CD8-positive, alpha-beta T cell (primary cell): ENCODE measurements at regions of chr1 and their contacts with region 1.

Region 1: DNA sequence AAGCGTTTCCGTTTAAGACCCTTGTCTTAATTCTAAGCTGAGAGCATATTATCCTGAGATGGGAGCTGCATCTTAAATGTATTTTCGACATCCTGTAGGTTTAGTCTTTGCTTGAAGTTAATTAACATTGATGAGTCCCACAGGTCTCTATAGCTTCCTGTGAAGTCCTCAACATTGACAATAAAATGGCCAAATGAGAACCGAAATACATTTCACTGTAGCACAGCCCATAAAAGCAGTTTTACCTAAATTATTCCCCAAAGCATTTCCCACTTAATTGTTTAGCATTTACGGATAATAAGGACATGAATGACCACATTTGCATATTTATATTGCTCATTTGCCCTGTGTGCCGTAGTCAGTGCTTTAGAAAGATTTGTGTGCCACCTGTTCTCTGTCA is 116.4 kb downstream of the CRB1 start:
- DNase-seq: no peak
- ATAC-seq: no peak
- H3K4me3 ChIP-seq: no peak overlapping the region
- H3K4me3 Mint-ChIP-seq: no peak overlapping the region
- H3K27ac ChIP-seq: no peak overlapping the region
- H3K27ac Mint-ChIP-seq: no peak overlapping the region
- H3K4me1 ChIP-seq: no peaks in the 10 kb centered on the region
- H3K4me1 Mint-ChIP-seq: peaks cover 3% of the 10 kb centered on the region
- H3K27me3 ChIP-seq: no peaks in the 10 kb centered on the region
- H3K27me3 Mint-ChIP-seq: no peaks in the 10 kb centered on the region
- CTCF ChIP-seq: no peak

Region 2: DNA sequence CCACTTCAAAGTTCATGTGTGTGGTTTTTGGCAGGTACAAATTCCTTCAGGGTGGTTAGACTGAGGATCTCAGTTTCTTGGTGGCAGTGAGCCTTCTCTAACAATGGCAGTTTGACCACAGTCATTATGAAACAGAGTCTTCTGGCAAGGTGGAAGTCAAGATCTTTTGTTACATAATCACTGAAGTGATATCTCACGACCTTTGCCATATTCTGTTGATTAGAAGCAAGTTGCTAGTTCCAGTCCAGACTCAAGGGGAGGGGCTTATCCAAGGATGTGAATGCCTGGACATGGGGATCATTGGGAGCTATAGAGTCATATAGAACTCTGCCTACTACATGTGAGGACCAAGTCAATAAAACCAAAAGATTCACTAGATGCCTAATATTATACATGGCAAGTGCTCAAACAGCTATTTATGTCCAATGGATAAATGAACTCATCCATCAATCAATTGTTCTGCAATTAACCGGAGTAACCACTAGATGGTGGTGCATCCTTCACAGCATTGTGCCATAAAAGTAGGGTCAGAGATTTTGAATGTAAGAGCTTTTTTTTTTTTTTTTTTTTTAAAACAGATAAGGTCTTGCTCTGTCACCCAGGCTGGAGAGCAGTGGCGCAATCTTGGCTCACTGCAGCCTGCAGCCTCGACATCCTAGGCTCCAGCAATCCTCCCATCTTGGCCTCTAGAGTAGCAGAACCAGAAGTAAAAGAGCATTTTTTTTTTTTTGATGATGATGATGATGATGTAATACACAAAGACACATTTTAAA is 15.5 kb after region 1 on chr1:
- CTCF ChIA-PET with region 1: interaction called, 12 read pairs
- POLR2A ChIA-PET with region 1: no interaction called
- intact Hi-C with region 1: no loop called
- DNase-seq: peak in 2 of 9 experiments; percentile 48 to 62
- ATAC-seq: peak; percentile 71
- H3K4me3 ChIP-seq: no peak overlapping the region
- H3K4me3 Mint-ChIP-seq: no peak overlapping the region
- H3K27ac ChIP-seq: no peak overlapping the region
- H3K27ac Mint-ChIP-seq: no peak overlapping the region
- H3K4me1 ChIP-seq: no peaks in the 10 kb centered on the region
- H3K4me1 Mint-ChIP-seq: peaks cover 2% of the 10 kb centered on the region
- H3K27me3 ChIP-seq: peaks cover 0 to 3% of the 10 kb centered on the region in 2 experiments
- H3K27me3 Mint-ChIP-seq: peaks cover 3% of the 10 kb centered on the region
- CTCF ChIP-seq: peak; percentile 57

Region 3: DNA sequence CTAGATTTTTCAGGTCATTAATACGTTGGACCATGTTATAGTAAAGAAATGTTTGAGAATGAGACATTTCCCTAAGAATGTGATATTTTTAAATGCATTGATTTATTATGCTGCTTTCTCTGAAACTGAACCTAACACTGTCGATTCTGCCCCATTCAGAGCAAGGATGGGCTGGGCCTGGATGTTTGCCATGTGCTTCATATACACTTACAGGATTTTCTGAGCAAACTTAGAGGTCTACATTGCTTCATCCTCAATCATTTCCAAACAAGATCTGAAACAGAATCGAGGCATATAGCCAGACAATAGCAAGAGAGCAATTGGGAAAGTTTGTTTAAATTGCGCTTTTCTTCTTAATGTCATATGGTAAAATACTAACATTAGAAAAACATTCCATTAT is 67.0 kb after region 1 on chr1:
- CTCF ChIA-PET with region 1: no interaction called
- POLR2A ChIA-PET with region 1: no interaction called
- intact Hi-C with region 1: no loop called
- DNase-seq: no peak
- ATAC-seq: no peak
- H3K4me3 ChIP-seq: no peak overlapping the region
- H3K4me3 Mint-ChIP-seq: no peak overlapping the region
- H3K27ac ChIP-seq: no peak overlapping the region
- H3K27ac Mint-ChIP-seq: no peak overlapping the region
- H3K4me1 ChIP-seq: no peaks in the 10 kb centered on the region
- H3K4me1 Mint-ChIP-seq: peaks cover 7% of the 10 kb centered on the region
- H3K27me3 ChIP-seq: no peaks in the 10 kb centered on the region
- H3K27me3 Mint-ChIP-seq: no peaks in the 10 kb centered on the region
- CTCF ChIP-seq: no peak

Region 4: DNA sequence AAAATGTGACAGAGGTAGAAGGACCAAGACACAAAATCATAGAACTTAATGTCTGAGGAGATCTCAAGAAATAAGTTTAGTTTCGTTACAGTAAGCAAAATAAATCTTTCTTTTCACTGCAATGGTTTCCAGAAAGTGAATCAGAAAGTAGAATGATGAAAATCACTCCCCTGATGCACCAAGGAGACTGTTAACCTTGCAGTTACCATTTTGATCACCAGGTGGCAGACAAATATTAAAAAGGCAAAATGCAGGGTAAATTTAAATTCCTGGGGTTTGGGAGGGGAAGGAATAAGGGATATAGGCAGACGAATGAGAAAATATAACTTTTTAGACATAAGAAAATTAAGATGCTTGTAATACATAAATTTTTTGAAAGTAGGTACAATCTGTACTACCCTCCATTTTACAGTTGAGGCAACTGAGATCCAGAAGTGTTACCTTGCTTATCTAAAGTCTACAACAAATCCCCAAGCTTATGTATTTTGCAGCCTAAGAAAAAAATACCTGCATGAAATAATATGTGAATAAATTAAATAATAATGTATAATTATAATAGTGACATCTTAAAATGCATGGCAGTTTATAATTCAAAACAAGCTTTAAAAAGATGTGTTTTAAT is 136.8 kb after region 1 on chr1:
- CTCF ChIA-PET with region 1: no interaction called
- POLR2A ChIA-PET with region 1: no interaction called
- intact Hi-C with region 1: no loop called
- DNase-seq: peak in 3 of 9 experiments; percentile 19 to 59 (median 44)
- ATAC-seq: peak; percentile 52
- H3K4me3 ChIP-seq: no peak overlapping the region
- H3K4me3 Mint-ChIP-seq: no peak overlapping the region
- H3K27ac ChIP-seq: no peak overlapping the region
- H3K27ac Mint-ChIP-seq: no peak overlapping the region
- H3K4me1 ChIP-seq: no peaks in the 10 kb centered on the region
- H3K4me1 Mint-ChIP-seq: no peaks in the 10 kb centered on the region
- H3K27me3 ChIP-seq: no peaks in the 10 kb centered on the region
- H3K27me3 Mint-ChIP-seq: no peaks in the 10 kb centered on the region
- CTCF ChIP-seq: peak; percentile 87